GM12878 (cell line): ENCODE measurements at regions of chr9 and their contacts with region 1.

Region 1: DNA sequence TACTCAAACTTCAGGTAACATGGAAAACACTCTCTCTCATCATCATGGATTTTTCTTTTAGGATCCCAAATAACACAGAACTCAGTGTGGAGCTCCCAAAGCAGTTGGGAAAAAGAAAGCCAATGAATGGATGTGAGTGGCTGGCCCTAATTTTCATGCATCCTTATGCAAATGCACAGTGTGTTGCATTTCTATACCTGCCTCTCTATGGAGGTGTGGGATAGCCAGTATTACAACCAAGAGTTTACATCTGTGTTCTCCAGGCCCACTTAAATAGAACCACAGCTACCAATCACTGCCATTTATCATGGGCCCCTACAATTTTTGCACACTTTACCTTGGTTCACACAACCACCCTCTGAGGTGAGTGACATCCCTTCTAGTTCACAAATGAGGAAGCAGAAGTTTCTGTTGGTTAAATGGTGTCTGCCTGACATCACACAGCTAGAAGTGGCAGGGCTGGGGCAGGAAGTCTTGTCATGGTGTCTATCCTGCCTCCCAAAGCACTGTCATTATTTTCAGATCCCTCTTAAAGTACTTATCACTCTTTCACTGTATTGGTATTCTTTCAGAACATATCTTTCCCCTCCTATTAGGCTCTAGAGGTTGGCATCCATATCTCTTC is 17.3 kb downstream of the MAMDC2 start:
- DNase-seq: no peak
- ATAC-seq: peak; percentile 90
- H3K4me3 ChIP-seq: no peak overlapping the region
- H3K27ac ChIP-seq: no peak overlapping the region
- H3K4me1 ChIP-seq: no peaks in the 10 kb centered on the region
- H3K27me3 ChIP-seq: no peaks in the 10 kb centered on the region; a peak in 1 of 4 replicates
- CTCF ChIP-seq: no peak
- EP300 ChIP-seq: no peak
- POLR2A ChIP-seq: no peak
- RAD21 ChIP-seq: no peak

Region 2: GRCh38 chr9:69771775-69772418 is 289.1 kb before region 1 on chr9:
- CTCF ChIA-PET with region 1: no interaction called
- POLR2A ChIA-PET with region 1: no interaction called
- RAD21 ChIA-PET with region 1: no interaction called
- SMC1A ChIA-PET with region 1: no interaction called
- in situ Hi-C with region 1: no loop called
- intact Hi-C with region 1: no loop called
- DNase-seq: no peak
- ATAC-seq: no peak
- H3K4me3 ChIP-seq: no peak overlapping the region
- H3K27ac ChIP-seq: no peak overlapping the region
- H3K4me1 ChIP-seq: no peaks in the 10 kb centered on the region
- H3K27me3 ChIP-seq: no peaks in the 10 kb centered on the region
- CTCF ChIP-seq: no peak
- EP300 ChIP-seq: no peak
- POLR2A ChIP-seq: no peak
- RAD21 ChIP-seq: no peak

Region 3: GRCh38 chr9:69971643-69972449 is 89.1 kb before region 1 on chr9:
- CTCF ChIA-PET with region 1: no interaction called
- POLR2A ChIA-PET with region 1: no interaction called
- RAD21 ChIA-PET with region 1: no interaction called
- SMC1A ChIA-PET with region 1: no interaction called
- in situ Hi-C with region 1: no loop called
- intact Hi-C with region 1: no loop called
- DNase-seq: no peak
- ATAC-seq: peak; percentile 88
- H3K4me3 ChIP-seq: no peak overlapping the region
- H3K27ac ChIP-seq: no peak overlapping the region
- H3K4me1 ChIP-seq: no peaks in the 10 kb centered on the region
- H3K27me3 ChIP-seq: peaks cover 0 to 2% of the 10 kb centered on the region in 2 experiments; a peak in 2 of 4 replicates
- CTCF ChIP-seq: peak; percentile 82 to 89 (median 88)
- EP300 ChIP-seq: no peak
- POLR2A ChIP-seq: no peak
- RAD21 ChIP-seq: peak; percentile 85

Region 4: DNA sequence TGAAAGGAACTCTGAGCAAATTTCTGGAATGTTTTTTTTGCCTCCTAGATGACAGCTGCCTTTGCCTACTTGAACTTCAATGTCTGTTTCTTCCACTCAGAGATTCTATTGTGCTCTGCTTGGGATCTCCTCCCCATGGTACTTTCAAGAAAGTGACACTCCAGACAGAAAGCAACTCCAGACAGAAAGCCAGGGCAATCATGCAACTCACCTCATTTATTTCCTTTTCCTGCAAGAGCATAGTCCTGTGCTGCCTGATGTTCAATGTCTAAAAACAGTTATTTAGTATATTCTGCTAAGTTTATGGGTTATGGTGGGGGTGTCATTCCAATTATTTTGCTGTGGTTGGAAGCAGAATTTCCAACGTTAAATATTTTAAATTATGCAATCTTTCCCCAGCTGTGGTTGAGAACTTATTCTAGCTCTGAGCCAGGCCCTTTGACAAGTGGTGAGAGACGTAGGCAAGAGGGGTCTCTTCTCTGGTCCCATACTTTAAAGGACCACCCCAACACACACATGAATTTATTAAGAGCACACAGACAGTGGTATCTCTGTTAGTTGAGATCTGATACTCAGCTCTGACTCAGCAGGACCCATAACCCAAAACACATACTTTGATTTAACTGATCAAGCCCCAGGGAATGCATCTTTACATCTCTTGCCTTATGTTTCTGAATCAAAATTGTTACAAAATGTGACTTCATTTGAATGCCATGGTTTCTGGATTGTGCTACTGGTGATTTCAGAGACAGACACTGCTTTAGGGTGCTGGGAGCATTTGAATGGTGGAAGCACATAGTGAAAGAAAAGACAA is 56.9 kb before region 1 on chr9:
- CTCF ChIA-PET with region 1: no interaction called
- POLR2A ChIA-PET with region 1: no interaction called
- RAD21 ChIA-PET with region 1: no interaction called
- SMC1A ChIA-PET with region 1: no interaction called
- in situ Hi-C with region 1: no loop called
- intact Hi-C with region 1: loop called (anchors 5 kb)
- DNase-seq: no peak
- ATAC-seq: no peak
- H3K4me3 ChIP-seq: no peak overlapping the region
- H3K27ac ChIP-seq: no peak overlapping the region
- H3K4me1 ChIP-seq: no peaks in the 10 kb centered on the region
- H3K27me3 ChIP-seq: no peaks in the 10 kb centered on the region
- CTCF ChIP-seq: no peak
- EP300 ChIP-seq: no peak
- POLR2A ChIP-seq: no peak
- RAD21 ChIP-seq: no peak